ENCODE measurements at regions of chr17 and their contacts with region 1.

Region 1: GRCh38 chr17:59565171-59565969 is at the start of gene DHX40:
- DNase-seq: peak; percentile 98
- ATAC-seq: peak; percentile 96
- H3K4me3 ChIP-seq: peak within 1 kb of the TSS; percentile 91 to 100 (median 96)
- H3K4me3 Mint-ChIP-seq: peak within 1 kb of the TSS; percentile 99
- H3K27ac ChIP-seq: peak within 1 kb of the TSS; percentile 81 to 92
- H3K27ac Mint-ChIP-seq: peak within 1 kb of the TSS; percentile 99
- H3K4me1 ChIP-seq: peaks cover 13 to 15% of the 10 kb centered on the region in 2 donors
- H3K4me1 Mint-ChIP-seq: peaks cover 19% of the 10 kb centered on the region
- H3K27me3 ChIP-seq: no peaks in the 10 kb centered on the region
- H3K27me3 Mint-ChIP-seq: no peaks in the 10 kb centered on the region
- CTCF ChIP-seq: no peak
- total RNA-seq, gene DHX40: 28.7 and 30.4 TPM in 2 replicates

Region 2: DNA sequence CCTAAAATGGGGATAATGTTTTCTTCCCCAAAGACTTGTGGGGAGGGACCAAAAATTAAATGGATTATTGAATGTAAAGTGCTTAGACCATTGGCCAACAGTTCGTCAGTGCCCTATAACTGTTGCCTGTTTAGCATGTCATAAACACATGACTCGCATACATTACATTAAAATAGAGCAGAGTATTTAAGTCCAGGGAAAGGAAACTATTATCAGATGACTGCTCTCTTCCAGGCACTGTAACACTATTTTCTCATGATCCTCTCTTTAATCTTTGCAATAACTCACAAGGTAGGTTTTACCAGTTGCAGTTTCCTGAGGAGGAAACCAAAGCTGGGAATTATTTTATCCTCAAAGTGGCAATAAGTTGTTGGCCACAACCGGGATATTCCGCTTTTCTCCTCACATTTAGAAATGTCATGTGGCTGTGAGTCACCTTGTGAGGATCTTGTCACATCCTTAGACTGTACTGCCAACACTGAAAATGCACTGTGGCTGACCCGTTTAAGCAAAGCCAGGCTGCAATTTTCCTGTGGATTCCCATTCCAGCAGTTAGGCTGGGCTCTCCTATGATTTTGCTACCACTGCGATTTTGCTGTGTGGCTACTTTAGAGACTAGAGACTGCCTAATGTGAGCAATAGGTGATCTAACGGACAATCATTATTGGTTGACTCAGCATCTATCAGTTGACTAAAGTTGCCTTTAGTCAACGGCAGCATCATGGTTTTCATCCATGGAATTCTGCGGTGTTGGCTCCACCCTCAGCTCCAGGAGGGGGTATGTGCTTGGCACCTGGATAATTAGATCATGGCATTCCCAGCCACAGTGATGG is 58.3 kb before region 1 on chr17:
- CTCF ChIA-PET with region 1: no interaction called
- POLR2A ChIA-PET with region 1: no interaction called
- intact Hi-C with region 1: no loop called
- DNase-seq: no peak
- ATAC-seq: no peak
- H3K4me3 ChIP-seq: no peak overlapping the region
- H3K4me3 Mint-ChIP-seq: no peak overlapping the region
- H3K27ac ChIP-seq: no peak overlapping the region
- H3K27ac Mint-ChIP-seq: no peak overlapping the region
- H3K4me1 ChIP-seq: no peaks in the 10 kb centered on the region
- H3K4me1 Mint-ChIP-seq: no peaks in the 10 kb centered on the region
- H3K27me3 ChIP-seq: peaks cover 0 to 4% (median 2%) of the 10 kb centered on the region in 4 experiments
- H3K27me3 Mint-ChIP-seq: peaks cover 20% of the 10 kb centered on the region
- CTCF ChIP-seq: no peak

Region 3: DNA sequence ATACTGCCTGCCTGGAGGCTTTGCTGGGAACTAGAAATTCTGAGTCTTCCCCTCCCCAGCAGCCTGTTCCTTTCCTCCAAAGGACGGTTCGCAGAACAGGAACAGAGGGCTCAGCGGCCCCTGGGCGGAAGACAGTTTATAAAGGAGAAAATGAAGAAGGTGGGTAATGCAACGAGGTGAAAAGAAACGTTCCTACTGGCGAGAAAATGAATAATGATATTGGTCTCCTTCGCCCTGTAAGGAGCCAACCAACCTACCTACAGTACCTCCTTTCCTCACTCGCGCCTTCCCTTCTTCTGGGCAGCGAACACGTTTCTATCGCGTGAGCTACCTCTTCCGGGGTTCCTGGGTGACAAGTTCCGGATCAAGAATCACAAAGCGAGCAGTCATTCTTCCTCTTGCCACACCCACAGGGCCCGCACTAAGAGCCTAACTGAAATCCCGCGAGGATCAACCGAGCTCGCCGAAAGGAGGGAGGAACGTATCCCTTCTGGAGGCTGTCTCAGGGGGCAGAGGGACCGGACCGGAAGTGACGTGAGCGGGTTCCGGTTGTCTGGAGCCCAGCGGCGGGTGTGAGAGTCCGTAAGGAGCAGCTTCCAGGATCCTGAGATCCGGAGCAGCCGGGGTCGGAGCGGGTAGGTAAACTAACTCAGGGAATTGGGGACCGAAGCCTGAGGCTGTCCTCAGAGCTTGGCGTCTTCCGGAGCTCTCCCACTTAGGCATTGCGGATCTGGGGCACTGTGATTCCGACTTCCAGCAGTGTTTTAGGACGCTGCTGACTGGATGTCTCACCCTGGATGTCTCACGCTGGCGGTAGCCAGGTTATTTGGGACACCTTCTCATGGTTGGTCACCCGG is 142.0 kb after region 1 on chr17 and contains the starts of genes PTRH2 and VMP1:
- CTCF ChIA-PET with region 1: no interaction called
- POLR2A ChIA-PET with region 1: no interaction called
- intact Hi-C with region 1: loop called (anchors 5 kb)
- DNase-seq: peak; percentile 95
- ATAC-seq: peak; percentile 90
- H3K4me3 ChIP-seq: peak within 1 kb of the TSS; percentile 72 to 98 (median 94)
- H3K4me3 Mint-ChIP-seq: peak within 1 kb of the TSS; percentile 99
- H3K27ac ChIP-seq: peak within 1 kb of the TSS; percentile 86 to 98
- H3K27ac Mint-ChIP-seq: peak within 1 kb of the TSS; percentile 97
- H3K4me1 ChIP-seq: peaks cover 23 to 24% of the 10 kb centered on the region in 2 donors
- H3K4me1 Mint-ChIP-seq: peaks cover 55% of the 10 kb centered on the region
- H3K27me3 ChIP-seq: no peaks in the 10 kb centered on the region
- H3K27me3 Mint-ChIP-seq: no peaks in the 10 kb centered on the region
- CTCF ChIP-seq: no peak
- total RNA-seq, gene PTRH2: 17.8 and 22.7 TPM in 2 replicates
- total RNA-seq, gene VMP1: 78.5 and 83.5 TPM in 2 replicates

Measured in B cell (primary cell).